Left colon (tissue), 2 donors: ENCODE measurements at regions of chr6 and their contacts with region 1.

Region 1: DNA sequence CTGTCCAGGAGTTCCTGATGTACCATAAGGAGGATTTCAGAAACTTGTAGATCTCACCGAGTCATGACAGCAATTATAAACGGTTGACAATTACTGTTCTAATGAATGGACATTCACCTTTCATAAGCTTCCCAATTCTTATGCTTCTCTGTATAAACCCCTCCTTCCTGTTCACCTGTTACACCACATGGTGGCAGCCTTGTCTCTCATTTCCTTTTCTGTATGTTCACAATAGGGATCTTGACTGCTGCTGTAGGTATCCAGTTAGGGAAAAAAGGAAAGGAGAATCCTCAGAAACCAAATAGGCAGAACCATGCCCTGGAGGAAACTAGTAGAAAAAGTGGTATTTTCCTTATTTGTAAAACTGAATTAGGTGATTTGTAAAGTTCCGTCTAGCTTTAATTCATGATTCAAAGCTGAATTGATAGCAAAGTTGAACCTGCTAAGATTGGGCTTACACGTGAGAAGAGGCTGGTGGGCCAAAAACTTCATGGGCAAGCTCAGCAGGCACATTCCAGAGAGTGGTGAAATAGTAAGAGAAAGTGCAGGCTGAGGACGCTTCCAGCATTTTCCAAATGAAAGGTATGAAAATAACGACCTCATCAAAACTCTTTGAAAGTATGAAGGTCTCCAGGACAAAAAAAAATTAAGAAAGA is 29.0 kb upstream of the TBPL1 start:
- DNase-seq: peak; percentile 45 to 63
- ATAC-seq: peak; percentile 93

Region 2: DNA sequence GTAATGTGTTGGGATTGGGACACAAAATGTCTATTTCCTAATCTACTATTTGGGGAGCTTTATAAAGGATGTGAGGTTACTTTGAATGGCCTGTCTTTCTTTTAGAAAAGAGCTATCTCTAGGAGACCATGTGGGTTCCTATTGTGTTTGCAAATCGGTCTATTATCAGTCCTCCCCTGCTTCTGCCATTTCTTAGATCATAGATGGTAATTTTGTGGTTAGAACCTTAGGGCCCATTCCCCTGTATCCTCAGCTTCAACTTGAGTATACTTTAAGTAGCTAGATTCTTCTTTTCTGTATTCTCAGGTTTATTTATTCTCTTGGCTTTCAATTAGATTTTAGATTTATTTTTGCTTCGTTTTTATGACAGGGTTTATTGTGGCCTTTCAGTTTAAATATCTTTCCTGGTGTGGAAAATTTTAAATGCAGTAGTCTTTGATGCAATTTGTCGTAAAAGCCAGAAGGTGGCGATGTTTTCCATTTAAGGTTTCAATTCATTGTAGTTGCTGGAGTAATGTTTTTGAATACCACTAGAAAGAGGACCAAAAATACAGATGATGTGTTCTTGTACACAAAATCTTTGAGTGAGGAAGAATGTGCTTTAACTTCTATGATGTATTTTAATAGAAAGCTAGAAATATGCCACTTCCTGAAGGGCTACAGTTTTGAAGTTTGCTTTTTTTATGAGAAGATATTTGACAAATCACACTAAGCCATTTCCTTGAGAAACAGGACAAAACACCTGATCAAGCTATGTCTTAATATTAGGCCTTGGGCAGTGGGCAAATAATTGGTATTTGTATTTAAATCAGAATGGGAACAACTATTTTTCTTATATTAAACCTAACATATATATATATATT is 49.3 kb after region 1 on chr6:
- intact Hi-C with region 1: loop called in 1 of 2 experiments (anchors 10 kb)
- DNase-seq: no peak
- ATAC-seq: peak; percentile 52

Region 3: GRCh38 chr6:134063966-134064445 is 139.9 kb after region 1 on chr6:
- intact Hi-C with region 1: loop called in 1 of 2 experiments (anchors 10 kb)
- DNase-seq: peak; percentile 40 to 50
- ATAC-seq: peak; percentile 92

Region 4: DNA sequence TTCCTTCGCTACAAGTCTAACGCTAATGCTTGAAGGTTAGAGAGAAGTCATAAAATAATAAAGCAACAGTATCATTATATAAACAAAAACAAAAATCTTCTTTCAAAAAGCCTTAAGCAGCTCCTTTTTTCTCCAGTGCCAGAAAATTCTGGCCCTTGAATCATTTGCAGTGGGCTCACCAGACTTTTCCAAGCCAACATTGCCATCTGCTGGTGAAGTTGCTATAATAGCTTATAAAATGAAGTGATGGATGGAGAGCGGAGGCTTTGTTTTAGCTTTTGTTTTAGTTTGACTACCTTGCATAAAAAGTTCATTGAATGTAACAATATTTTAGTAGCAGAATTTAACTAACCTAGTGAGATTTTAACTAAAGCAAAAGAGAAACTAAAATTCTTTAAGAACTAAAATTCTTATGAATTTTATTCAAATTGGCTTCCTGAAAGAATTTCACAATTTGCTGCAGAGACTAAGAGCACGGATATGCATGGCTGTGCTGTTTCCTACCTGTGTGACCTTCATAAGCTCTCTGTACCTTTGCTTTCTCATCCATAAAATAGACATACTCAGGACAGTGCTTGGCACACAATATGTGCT is 173.1 kb after region 1 on chr6:
- intact Hi-C with region 1: loop called in 1 of 2 experiments (anchors 2 kb)
- DNase-seq: peak; percentile 30 to 67
- ATAC-seq: peak; percentile 62